ENCODE measurements at regions of chr4 and their contacts with region 1.

Region 1: GRCh38 chr4:142405021-142405694 is 440.9 kb downstream of the INPP4B start:
- DNase-seq: peak; percentile 77
- H3K4me3 Mint-ChIP-seq: peak overlapping the region; percentile 92
- H3K27ac Mint-ChIP-seq: peak overlapping the region; percentile 97
- H3K4me1 Mint-ChIP-seq: peaks cover 40% of the 10 kb centered on the region
- H3K27me3 Mint-ChIP-seq: no peaks in the 10 kb centered on the region

Region 2: GRCh38 chr4:142353149-142353738 is 51.9 kb before region 1 on chr4:
- CTCF ChIA-PET with region 1: interaction called, 17 read pairs
- POLR2A ChIA-PET with region 1: interaction called, 19 read pairs
- intact Hi-C with region 1: loop called (anchors 1 kb)
- DNase-seq: no peak
- H3K4me3 Mint-ChIP-seq: peak overlapping the region; percentile 55
- H3K27ac Mint-ChIP-seq: peak overlapping the region; percentile 87
- H3K4me1 Mint-ChIP-seq: peaks cover 95% of the 10 kb centered on the region
- H3K27me3 Mint-ChIP-seq: no peaks in the 10 kb centered on the region

Region 3: GRCh38 chr4:142386449-142386848 is 18.7 kb before region 1 on chr4:
- CTCF ChIA-PET with region 1: interaction called, 7 read pairs
- POLR2A ChIA-PET with region 1: interaction called, 97 read pairs
- intact Hi-C with region 1: no loop called
- DNase-seq: peak; percentile 36
- H3K4me3 Mint-ChIP-seq: peak overlapping the region; percentile 77
- H3K27ac Mint-ChIP-seq: peak overlapping the region; percentile 89
- H3K4me1 Mint-ChIP-seq: peaks cover 76% of the 10 kb centered on the region
- H3K27me3 Mint-ChIP-seq: no peaks in the 10 kb centered on the region

Region 4: GRCh38 chr4:142558851-142559250 is 153.7 kb after region 1 on chr4:
- CTCF ChIA-PET with region 1: no interaction called
- POLR2A ChIA-PET with region 1: interaction called, 24 read pairs
- intact Hi-C with region 1: no loop called
- DNase-seq: no peak
- H3K4me3 Mint-ChIP-seq: peak overlapping the region; percentile 64
- H3K27ac Mint-ChIP-seq: peak overlapping the region; percentile 76
- H3K4me1 Mint-ChIP-seq: peaks cover 75% of the 10 kb centered on the region
- H3K27me3 Mint-ChIP-seq: no peaks in the 10 kb centered on the region

Region 5: DNA sequence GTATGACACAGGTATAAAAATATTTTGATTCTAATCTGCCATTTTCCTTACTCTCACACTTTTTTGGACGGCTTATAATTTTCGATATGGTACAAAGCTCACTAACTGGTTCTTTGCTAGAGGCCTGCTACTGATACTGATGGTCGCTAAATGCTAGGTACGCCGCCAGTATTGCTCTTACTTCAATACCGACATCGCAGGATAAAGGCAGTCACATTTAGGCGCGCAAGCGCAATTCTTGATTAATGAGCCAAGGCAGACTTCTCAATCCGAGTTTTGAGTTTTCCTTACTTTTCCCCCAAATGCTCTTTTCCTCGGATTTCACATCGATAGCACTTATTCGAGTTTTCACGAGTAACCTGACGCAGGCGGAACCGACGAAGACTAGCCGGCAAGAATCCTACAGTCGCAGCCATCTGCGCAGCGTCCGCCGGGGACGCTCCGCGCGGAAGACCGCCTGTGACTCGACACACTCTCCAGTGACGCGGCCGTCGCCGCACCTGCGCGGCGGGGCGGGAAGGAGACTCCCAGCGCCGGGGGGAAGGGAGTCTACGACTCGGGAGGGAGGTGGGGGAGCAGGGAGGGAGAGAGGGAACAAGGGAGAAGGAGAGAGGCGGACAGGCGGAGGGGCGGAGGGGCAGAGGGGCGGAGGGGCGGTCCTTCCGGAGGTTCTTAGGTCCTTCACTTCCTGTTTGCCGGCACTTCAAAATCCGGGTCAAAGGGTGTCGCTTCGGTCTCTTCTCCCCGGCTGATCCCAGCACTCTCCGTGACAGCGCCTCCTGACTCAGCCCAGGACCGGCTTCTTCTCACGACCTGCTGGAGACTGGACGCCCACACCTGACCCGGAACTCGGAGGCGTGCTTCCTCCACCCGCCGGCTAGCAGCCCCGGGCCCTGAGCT is 779.3 kb after region 1 on chr4 and contains the start of gene USP38:
- CTCF ChIA-PET with region 1: no interaction called
- POLR2A ChIA-PET with region 1: no interaction called
- intact Hi-C with region 1: loop called (anchors 5 kb)
- DNase-seq: peak; percentile 96
- H3K4me3 Mint-ChIP-seq: peak within 1 kb of the TSS; percentile 87
- H3K27ac Mint-ChIP-seq: peak within 1 kb of the TSS; percentile 94
- H3K4me1 Mint-ChIP-seq: peaks cover 28% of the 10 kb centered on the region
- H3K27me3 Mint-ChIP-seq: no peaks in the 10 kb centered on the region
- total RNA-seq, gene USP38: 21.7 to 22.0 TPM